ENCODE measurements at regions of chr18 and their contacts with region 1.

Region 1: DNA sequence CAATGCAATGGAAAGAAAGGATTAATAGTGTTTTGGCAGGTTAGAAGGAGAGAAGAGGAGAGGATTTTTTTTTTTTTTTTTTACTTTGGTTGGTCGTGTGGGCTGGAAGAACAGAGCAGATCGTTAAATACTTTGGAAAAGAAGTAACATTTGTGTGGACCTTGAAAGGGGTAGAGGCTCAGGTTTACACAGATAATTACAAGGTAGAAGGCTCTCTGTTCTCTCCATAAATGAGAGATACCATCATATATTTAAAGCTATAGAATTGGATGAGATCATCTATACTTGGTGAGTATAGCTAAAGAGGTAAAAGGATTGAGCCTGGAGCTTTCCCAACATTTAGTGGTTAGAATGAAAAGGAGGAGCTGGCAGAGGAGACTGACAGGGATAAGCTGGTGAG is 49.0 kb downstream of the SMCHD1 start:
- DNase-seq: no peak
- H3K4me3 Mint-ChIP-seq: no peak overlapping the region
- H3K27ac Mint-ChIP-seq: peak overlapping the region; percentile 13
- H3K4me1 Mint-ChIP-seq: peaks cover 22% of the 10 kb centered on the region
- H3K27me3 Mint-ChIP-seq: no peaks in the 10 kb centered on the region

Region 2: GRCh38 chr18:2736823-2737222 is 32.3 kb after region 1 on chr18:
- CTCF ChIA-PET with region 1: no interaction called
- POLR2A ChIA-PET with region 1: no interaction called
- intact Hi-C with region 1: loop called (anchors 5 kb)
- DNase-seq: no peak
- H3K4me3 Mint-ChIP-seq: no peak overlapping the region
- H3K27ac Mint-ChIP-seq: no peak overlapping the region
- H3K4me1 Mint-ChIP-seq: peaks cover 4% of the 10 kb centered on the region
- H3K27me3 Mint-ChIP-seq: no peaks in the 10 kb centered on the region